ENCODE measurements at regions of chr1 and their contacts with region 1.

Region 1: GRCh38 chr1:156659994-156660751 is 17.0 kb downstream of the NES start:
- DNase-seq: peak; percentile 99
- ATAC-seq: peak; percentile 78
- H3K4me3 ChIP-seq: peak overlapping the region; percentile 79
- H3K27ac ChIP-seq: peak overlapping the region; percentile 100
- H3K4me1 ChIP-seq: peaks cover 70 to 79% of the 10 kb centered on the region in 2 experiments
- H3K27me3 ChIP-seq: no peaks in the 10 kb centered on the region
- CTCF ChIP-seq: peak; percentile 98 to 99 (median 99)
- EP300 ChIP-seq: peak; percentile 81
- POLR2A ChIP-seq: peak; percentile 95
- RAD21 ChIP-seq: peak; percentile 92 to 95

Region 2: DNA sequence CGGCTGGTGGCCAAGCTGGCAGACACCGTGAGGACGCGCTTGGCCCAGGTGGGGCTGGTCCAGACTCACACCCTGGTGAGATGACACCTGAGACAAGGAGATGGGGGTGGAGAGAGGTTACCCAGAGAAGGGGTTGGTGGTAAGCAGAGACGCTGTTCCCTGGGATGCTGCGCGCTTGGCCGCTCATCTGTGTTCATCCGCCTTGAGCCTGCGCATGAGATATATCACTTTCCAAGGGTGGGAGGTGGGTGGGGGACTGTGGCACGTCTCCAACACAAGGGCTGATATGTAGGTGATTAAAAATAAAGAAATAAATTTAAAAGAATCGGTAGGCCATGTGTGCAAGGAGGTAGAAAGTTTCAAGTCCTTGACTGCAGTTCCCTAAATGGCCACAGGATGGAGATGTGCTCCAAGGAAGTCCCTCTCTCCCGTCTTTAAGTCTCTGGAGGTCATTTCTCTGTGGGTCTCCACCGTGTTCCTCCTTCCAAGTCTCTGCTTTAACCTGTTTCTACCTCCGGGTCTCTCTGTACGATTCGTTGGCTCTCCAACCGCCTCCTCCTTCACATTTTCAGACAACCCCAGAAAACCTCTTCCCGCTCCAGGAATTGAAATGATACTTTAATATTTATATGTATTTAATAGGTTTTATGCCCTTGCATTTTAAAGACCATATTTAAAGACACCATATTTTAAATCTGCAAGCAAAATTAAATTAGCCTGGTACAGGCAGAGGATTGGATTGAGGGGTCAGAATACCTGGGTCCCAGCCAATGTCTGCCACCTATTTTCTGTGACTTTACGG is 76.2 kb before region 1 on chr1:
- CTCF ChIA-PET with region 1: interaction called, 12 read pairs
- POLR2A ChIA-PET with region 1: interaction called, 3 read pairs
- in situ Hi-C with region 1: no loop called
- intact Hi-C with region 1: no loop called
- DNase-seq: peak; percentile 77 to 89 (median 82)
- ATAC-seq: peak; percentile 81
- H3K4me3 ChIP-seq: no peak overlapping the region
- H3K27ac ChIP-seq: no peak overlapping the region
- H3K4me1 ChIP-seq: peaks cover 0 to 10% of the 10 kb centered on the region in 2 experiments; a peak in 3 of 5 replicates
- H3K27me3 ChIP-seq: no peaks in the 10 kb centered on the region
- CTCF ChIP-seq: peak; percentile 88 to 98 (median 90)
- EP300 ChIP-seq: no peak
- POLR2A ChIP-seq: no peak
- RAD21 ChIP-seq: peak; percentile 79 to 92

Region 3: GRCh38 chr1:156625436-156626078 is 34.6 kb before region 1 on chr1:
- CTCF ChIA-PET with region 1: interaction called, 58 read pairs
- POLR2A ChIA-PET with region 1: interaction called, 10 read pairs
- in situ Hi-C with region 1: no loop called
- intact Hi-C with region 1: loop called (anchors 1 kb)
- DNase-seq: peak; percentile 51 to 82 (median 73)
- ATAC-seq: peak; percentile 58
- H3K4me3 ChIP-seq: peak overlapping the region; percentile 52
- H3K27ac ChIP-seq: peak overlapping the region; percentile 69
- H3K4me1 ChIP-seq: peaks cover 0 to 25% of the 10 kb centered on the region in 2 experiments; a peak in 4 of 5 replicates
- H3K27me3 ChIP-seq: no peaks in the 10 kb centered on the region; a peak in 2 of 5 replicates
- CTCF ChIP-seq: peak; percentile 77 to 89 (median 82)
- EP300 ChIP-seq: no peak
- POLR2A ChIP-seq: no peak
- RAD21 ChIP-seq: peak; percentile 59 to 76

Region 4: DNA sequence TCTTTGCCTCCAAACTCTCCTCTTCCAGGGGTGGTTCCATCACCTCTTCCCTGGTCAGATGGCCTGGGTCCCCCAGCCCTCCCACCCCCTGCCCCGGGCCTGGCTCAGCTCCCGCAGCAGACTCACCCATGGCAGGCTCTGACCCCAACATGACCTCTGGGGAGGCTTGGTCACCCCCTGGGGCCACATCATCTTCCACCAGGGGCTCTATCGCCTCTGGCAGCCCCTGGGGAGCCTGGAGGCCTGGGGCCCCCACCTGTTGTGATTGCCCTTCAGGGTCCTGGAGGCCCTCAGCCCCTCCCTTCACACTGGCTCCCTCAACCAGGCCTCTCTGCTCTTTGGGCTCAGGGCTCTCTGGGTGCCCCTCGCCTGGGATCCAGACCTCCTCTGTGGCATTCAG is 10.6 kb after region 1 on chr1:
- CTCF ChIA-PET with region 1: no interaction called
- POLR2A ChIA-PET with region 1: interaction called, 24 read pairs
- in situ Hi-C with region 1: no loop called
- intact Hi-C with region 1: no loop called
- DNase-seq: peak in 2 of 4 experiments; percentile 42 to 57
- ATAC-seq: no peak
- H3K4me3 ChIP-seq: no peak overlapping the region
- H3K27ac ChIP-seq: no peak overlapping the region
- H3K4me1 ChIP-seq: peaks cover 13 to 73% of the 10 kb centered on the region in 2 experiments; a peak in 4 of 5 replicates
- H3K27me3 ChIP-seq: no peaks in the 10 kb centered on the region
- CTCF ChIP-seq: no peak
- EP300 ChIP-seq: no peak
- POLR2A ChIP-seq: no peak
- RAD21 ChIP-seq: no peak

Region 5: DNA sequence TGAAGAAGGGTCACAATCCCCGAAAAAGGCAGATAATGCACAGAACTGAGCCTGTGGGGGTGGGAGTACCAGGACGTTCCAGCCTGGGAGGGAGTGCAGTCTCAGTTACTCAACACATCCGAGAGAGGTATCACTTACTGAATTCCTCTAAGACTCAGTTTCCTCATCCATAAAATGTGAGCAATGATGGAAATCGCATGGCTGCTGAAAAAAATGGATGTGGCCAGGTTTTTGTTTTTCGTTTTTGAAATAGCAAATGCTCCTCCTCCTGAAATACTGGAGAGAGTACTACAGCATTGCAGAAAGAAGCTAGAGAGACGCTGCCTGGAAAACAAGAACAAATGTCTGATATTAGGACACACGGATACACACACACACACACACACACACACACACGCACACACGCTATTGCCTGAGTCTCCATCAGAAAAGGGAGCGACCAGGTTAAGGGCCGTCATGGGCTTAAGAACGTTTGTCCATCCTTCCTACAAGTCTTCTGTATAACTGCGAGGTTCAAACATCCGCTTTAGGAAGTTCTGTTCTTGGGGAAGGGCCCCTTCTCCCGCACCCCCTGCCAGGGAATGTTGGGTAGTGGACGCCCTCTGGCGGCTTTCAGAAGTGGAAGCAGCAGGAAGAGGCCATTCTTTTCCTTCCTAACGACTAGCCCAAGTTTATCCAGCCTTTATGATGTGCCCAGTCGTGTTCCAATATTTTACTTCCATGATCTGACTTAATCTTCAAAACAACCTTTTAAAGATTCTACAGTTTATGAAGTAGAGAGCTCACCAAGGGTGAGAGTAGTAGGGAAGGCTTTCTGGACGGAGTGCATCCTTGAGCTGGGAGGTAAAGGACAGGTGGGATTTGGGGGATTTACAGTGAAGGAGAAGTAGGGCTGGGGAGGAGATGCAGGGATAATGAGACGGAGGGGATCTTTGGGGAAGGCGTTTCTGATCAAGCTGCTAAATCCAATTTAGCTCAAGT is 17.7 kb after region 1 on chr1:
- CTCF ChIA-PET with region 1: interaction called, 110 read pairs
- POLR2A ChIA-PET with region 1: interaction called, 24 read pairs
- in situ Hi-C with region 1: no loop called
- intact Hi-C with region 1: loop called (anchors 1 kb)
- DNase-seq: peak; percentile 74 to 87 (median 78)
- ATAC-seq: peak; percentile 79
- H3K4me3 ChIP-seq: peak overlapping the region; percentile 7; the same call in 1 of the 2 replicates
- H3K27ac ChIP-seq: peak overlapping the region; percentile 53; the same call in 2 of the 3 replicates
- H3K4me1 ChIP-seq: peaks cover 22 to 44% of the 10 kb centered on the region in 2 experiments
- H3K27me3 ChIP-seq: peaks cover 6 to 9% of the 10 kb centered on the region in 2 experiments; a peak in 4 of 5 replicates
- CTCF ChIP-seq: peak; percentile 93 to 97 (median 95)
- EP300 ChIP-seq: no peak; the same call in 1 of the 2 replicates
- POLR2A ChIP-seq: no peak
- RAD21 ChIP-seq: peak; percentile 99

Region 6: GRCh38 chr1:156689035-156689952 is 29.1 kb after region 1 on chr1:
- CTCF ChIA-PET with region 1: interaction called, 3 read pairs
- POLR2A ChIA-PET with region 1: interaction called, 18 read pairs
- in situ Hi-C with region 1: no loop called
- intact Hi-C with region 1: no loop called
- DNase-seq: peak; percentile 87 to 90 (median 88)
- ATAC-seq: peak; percentile 81
- H3K4me3 ChIP-seq: peak overlapping the region; percentile 32
- H3K27ac ChIP-seq: peak overlapping the region; percentile 21; the same call in 2 of the 3 replicates
- H3K4me1 ChIP-seq: peaks cover 45 to 54% of the 10 kb centered on the region in 2 experiments
- H3K27me3 ChIP-seq: 0 out of 5 replicates have a peak, but pooled peaks cover 0 to 2% of the 10 kb centered on the region in 2 experiments
- CTCF ChIP-seq: peak; percentile 92 to 97 (median 97)
- EP300 ChIP-seq: 0 out of 2 replicates have a peak, but pooled peaks have one; percentile 12
- POLR2A ChIP-seq: no peak
- RAD21 ChIP-seq: peak; percentile 94 to 98

Region 7: DNA sequence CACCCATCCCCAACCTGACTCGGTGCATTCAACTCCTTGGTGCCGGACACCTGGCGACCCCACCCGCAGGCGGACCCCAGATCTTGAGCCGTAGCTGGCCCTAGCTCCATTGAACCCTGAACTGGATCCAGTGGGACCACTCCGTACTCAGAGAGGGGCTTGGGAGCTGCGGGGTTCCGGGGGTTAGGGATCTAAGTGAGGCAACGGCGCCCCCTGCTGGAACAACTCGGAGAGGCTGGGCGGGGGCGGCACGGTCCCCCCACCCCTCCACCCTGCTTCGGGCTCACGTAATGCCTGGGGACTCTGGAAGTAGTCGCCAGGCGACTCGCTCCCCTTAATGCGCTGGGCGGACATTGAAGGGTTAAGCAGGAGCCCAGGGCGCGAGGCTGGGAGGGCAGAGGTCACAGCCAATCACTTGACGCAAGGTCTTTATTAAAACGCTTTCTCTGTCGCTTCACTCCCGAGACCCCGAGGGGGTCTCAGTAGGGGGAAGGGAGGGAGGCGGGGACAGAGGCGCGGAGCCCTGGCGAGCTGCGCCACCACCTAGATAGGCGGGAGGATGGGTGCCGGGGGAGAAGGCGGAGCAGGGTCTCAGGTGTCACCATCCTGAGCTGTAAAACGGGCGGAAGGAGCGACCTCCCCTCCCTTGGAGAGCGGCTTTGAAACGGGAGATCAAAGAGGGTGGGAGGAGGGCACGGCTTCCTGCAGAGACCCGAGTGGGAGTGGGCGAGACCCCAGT is 45.9 kb after region 1 on chr1:
- CTCF ChIA-PET with region 1: interaction called, 36 read pairs
- POLR2A ChIA-PET with region 1: interaction called, 8 read pairs
- in situ Hi-C with region 1: no loop called
- intact Hi-C with region 1: no loop called
- DNase-seq: peak; percentile 86 to 96 (median 94)
- ATAC-seq: peak; percentile 91
- H3K4me3 ChIP-seq: peak overlapping the region; percentile 47
- H3K27ac ChIP-seq: peak overlapping the region; percentile 44; the same call in 2 of the 3 replicates
- H3K4me1 ChIP-seq: peaks cover 11 to 30% of the 10 kb centered on the region in 2 experiments; a peak in 4 of 5 replicates
- H3K27me3 ChIP-seq: no peaks in the 10 kb centered on the region
- CTCF ChIP-seq: peak; percentile 89 to 91 (median 89)
- EP300 ChIP-seq: no peak
- POLR2A ChIP-seq: no peak
- RAD21 ChIP-seq: peak; percentile 94 to 96

Region 8: GRCh38 chr1:156910309-156910782 is 250.2 kb after region 1 on chr1:
- CTCF ChIA-PET with region 1: no interaction called
- POLR2A ChIA-PET with region 1: no interaction called
- in situ Hi-C with region 1: no loop called
- intact Hi-C with region 1: no loop called
- DNase-seq: peak; percentile 79 to 89 (median 86)
- ATAC-seq: peak; percentile 49
- H3K4me3 ChIP-seq: peak overlapping the region; percentile 14; the same call in 1 of the 2 replicates
- H3K27ac ChIP-seq: no peak overlapping the region
- H3K4me1 ChIP-seq: peaks cover 52 to 73% of the 10 kb centered on the region in 2 experiments
- H3K27me3 ChIP-seq: no peaks in the 10 kb centered on the region
- CTCF ChIP-seq: peak; percentile 72 to 82 (median 76)
- EP300 ChIP-seq: no peak
- POLR2A ChIP-seq: no peak
- RAD21 ChIP-seq: peak; percentile 49 to 64

Region 9: DNA sequence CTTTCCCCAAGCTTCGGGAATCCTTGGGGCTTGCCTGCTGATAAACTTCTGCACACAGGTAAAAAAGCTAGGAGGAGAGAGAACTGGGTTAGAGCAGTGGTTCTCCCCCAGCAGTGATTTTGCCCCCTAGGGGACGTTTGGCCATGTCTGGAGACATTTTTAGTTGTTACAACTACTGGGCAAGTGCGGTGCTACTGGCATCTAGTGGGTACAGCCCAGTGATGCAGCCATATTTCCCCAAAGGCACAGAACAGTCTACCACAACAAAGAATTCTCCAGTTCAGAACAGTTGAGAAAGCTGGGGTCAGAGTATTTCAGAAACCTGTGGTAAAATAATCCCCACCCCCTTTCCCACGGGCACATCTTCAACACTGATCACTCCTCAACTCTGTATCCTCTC is 301.5 kb after region 1 on chr1:
- CTCF ChIA-PET with region 1: no interaction called
- POLR2A ChIA-PET with region 1: no interaction called
- in situ Hi-C with region 1: no loop called
- intact Hi-C with region 1: no loop called
- DNase-seq: peak in 1 of 4 experiments; percentile 25
- ATAC-seq: no peak
- H3K4me3 ChIP-seq: no peak overlapping the region
- H3K27ac ChIP-seq: no peak overlapping the region
- H3K4me1 ChIP-seq: peaks cover 15 to 40% of the 10 kb centered on the region in 2 experiments
- H3K27me3 ChIP-seq: no peaks in the 10 kb centered on the region
- CTCF ChIP-seq: peak; percentile 33 to 82 (median 55); a peak in 4 of 6 replicates
- EP300 ChIP-seq: no peak
- POLR2A ChIP-seq: no peak
- RAD21 ChIP-seq: peak in 1 of 2 experiments; percentile 18; a peak in 1 of 4 replicates

Region 10: GRCh38 chr1:157193702-157194391 is 533.7 kb after region 1 on chr1:
- CTCF ChIA-PET with region 1: no interaction called
- POLR2A ChIA-PET with region 1: no interaction called
- in situ Hi-C with region 1: no loop called
- intact Hi-C with region 1: no loop called
- DNase-seq: peak; percentile 72 to 83 (median 75)
- ATAC-seq: peak; percentile 66
- H3K4me3 ChIP-seq: no peak overlapping the region
- H3K27ac ChIP-seq: no peak overlapping the region
- H3K4me1 ChIP-seq: peaks cover 2 to 11% of the 10 kb centered on the region in 2 experiments; a peak in 1 of 5 replicates
- H3K27me3 ChIP-seq: peaks cover 11 to 31% of the 10 kb centered on the region in 2 experiments; a peak in 4 of 5 replicates
- CTCF ChIP-seq: peak; percentile 78 to 90 (median 83)
- EP300 ChIP-seq: no peak
- POLR2A ChIP-seq: no peak
- RAD21 ChIP-seq: peak; percentile 74 to 85

Region 11: GRCh38 chr1:157363660-157364140 is 703.5 kb after region 1 on chr1:
- CTCF ChIA-PET with region 1: no interaction called
- POLR2A ChIA-PET with region 1: no interaction called
- in situ Hi-C with region 1: no loop called
- intact Hi-C with region 1: no loop called
- DNase-seq: peak in 2 of 4 experiments; percentile 20 to 39
- ATAC-seq: peak; percentile 55
- H3K4me3 ChIP-seq: no peak overlapping the region
- H3K27ac ChIP-seq: no peak overlapping the region
- H3K4me1 ChIP-seq: peaks cover 13 to 41% of the 10 kb centered on the region in 2 experiments; a peak in 4 of 5 replicates
- H3K27me3 ChIP-seq: no peaks in the 10 kb centered on the region
- CTCF ChIP-seq: peak; percentile 42 to 46 (median 45); a peak in 4 of 6 replicates
- EP300 ChIP-seq: no peak
- POLR2A ChIP-seq: no peak
- RAD21 ChIP-seq: 0 out of 4 replicates have a peak, but pooled peaks of 1 of the 2 experiments have one; percentile 23

Measured in K562 (cell line).